H1 (cell line): ENCODE measurements at regions of chr6 and their contacts with region 1.

Region 1: GRCh38 chr6:37819177-37819823 is at the start of gene ZFAND3:
- DNase-seq: peak; percentile 79 to 98
- H3K4me3 ChIP-seq: peak within 1 kb of the TSS; percentile 74 to 93 (median 86)
- H3K27ac ChIP-seq: peak within 1 kb of the TSS; percentile 96
- H3K4me1 ChIP-seq: peaks cover 3 to 13% (median 7%) of the 10 kb centered on the region in 4 experiments; a peak in 6 of 7 replicates
- H3K27me3 ChIP-seq: no peaks in the 10 kb centered on the region; a peak in 1 of 7 replicates
- CTCF ChIP-seq: no peak
- EP300 ChIP-seq: peak in 1 of 2 experiments; percentile 95; a peak in 2 of 3 replicates
- POLR2A ChIP-seq: no peak
- RAD21 ChIP-seq: 0 out of 4 replicates have a peak, but pooled peaks of 1 of the 2 experiments have one; percentile 3
- total RNA-seq, gene ZFAND3: 44.8 and 51.3 TPM in 2 replicates

Region 2: GRCh38 chr6:37705239-37706051 is 113.9 kb before region 1 on chr6:
- CTCF ChIA-PET with region 1: no interaction called
- POLR2A ChIA-PET with region 1: interaction called, 13 read pairs
- DNase-seq: peak; percentile 67 to 85
- H3K4me3 ChIP-seq: peak overlapping the region; percentile 6 to 64 (median 38)
- H3K27ac ChIP-seq: peak overlapping the region; percentile 63; the same call in 1 of the 2 replicates
- H3K4me1 ChIP-seq: peaks cover 3 to 10% (median 8%) of the 10 kb centered on the region in 4 experiments; a peak in 6 of 7 replicates
- H3K27me3 ChIP-seq: peaks cover 11 to 23% (median 20%) of the 10 kb centered on the region in 4 experiments
- CTCF ChIP-seq: peak in 2 of 3 experiments; percentile 55 to 65; a peak in 3 of 4 replicates
- EP300 ChIP-seq: no peak
- POLR2A ChIP-seq: peak in 1 of 2 experiments; percentile 54; a peak in 2 of 3 replicates
- RAD21 ChIP-seq: peak; percentile 51

Region 3: DNA sequence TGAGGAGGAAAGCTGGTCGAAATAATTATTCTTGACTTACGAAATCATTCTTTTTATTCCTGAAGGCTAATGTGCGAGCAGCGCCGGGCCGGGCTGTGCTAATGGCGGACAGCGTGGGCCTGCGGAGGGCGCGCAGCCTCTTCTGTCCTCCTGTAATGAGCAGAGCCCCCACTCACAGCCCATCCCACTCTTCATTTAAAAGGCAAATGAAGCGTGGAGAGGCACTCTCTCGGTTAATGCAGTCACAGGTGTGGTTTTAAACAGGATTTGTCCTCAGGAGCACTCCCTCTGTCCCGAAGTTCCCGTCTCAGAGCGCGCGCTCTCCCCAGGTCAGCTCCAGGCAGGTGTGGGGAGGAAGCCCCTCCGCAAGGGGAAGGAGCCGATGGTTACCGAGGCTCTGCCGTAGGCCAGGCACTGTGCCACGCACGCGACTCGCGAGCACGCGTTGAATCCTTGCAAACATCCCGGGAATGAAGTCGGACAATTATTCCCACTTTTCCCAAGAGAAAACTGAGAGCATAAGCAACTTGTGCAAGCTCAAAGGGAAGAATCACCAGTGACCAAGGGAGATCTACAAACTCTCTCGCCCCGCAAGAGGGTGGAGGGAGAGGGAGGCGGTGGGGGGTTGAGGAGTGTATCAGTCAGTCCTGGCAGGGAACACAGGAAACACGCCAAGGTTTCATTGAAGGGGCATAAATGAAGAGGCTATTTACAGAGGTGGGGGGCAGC is 35.3 kb before region 1 on chr6:
- CTCF ChIA-PET with region 1: interaction called, 3 read pairs
- POLR2A ChIA-PET with region 1: interaction called, 26 read pairs
- DNase-seq: peak in 1 of 2 experiments; percentile 66
- H3K4me3 ChIP-seq: peak overlapping the region; percentile 44 to 73 (median 66)
- H3K27ac ChIP-seq: 0 out of 2 replicates have a peak overlapping the region, but pooled peaks have one; percentile 14
- H3K4me1 ChIP-seq: peaks cover 1 to 36% (median 20%) of the 10 kb centered on the region in 4 experiments
- H3K27me3 ChIP-seq: peaks cover 0 to 18% (median 14%) of the 10 kb centered on the region in 4 experiments; a peak in 6 of 7 replicates
- CTCF ChIP-seq: no peak
- EP300 ChIP-seq: no peak
- POLR2A ChIP-seq: peak in 1 of 2 experiments; percentile 52; a peak in 2 of 3 replicates
- RAD21 ChIP-seq: no peak

Region 4: GRCh38 chr6:37791156-37791919 is 28.0 kb before region 1 on chr6:
- CTCF ChIA-PET with region 1: interaction called, 5 read pairs
- POLR2A ChIA-PET with region 1: interaction called, 24 read pairs
- DNase-seq: peak; percentile 87 to 88
- H3K4me3 ChIP-seq: peak overlapping the region in 1 of 4 experiments; percentile 11; a peak in 2 of 8 replicates
- H3K27ac ChIP-seq: no peak overlapping the region
- H3K4me1 ChIP-seq: peaks cover 0 to 6% (median 4%) of the 10 kb centered on the region in 4 experiments; a peak in 5 of 7 replicates
- H3K27me3 ChIP-seq: no peaks in the 10 kb centered on the region
- CTCF ChIP-seq: peak; percentile 81 to 91 (median 89)
- EP300 ChIP-seq: peak in 1 of 2 experiments; percentile 55; a peak in 1 of 3 replicates
- POLR2A ChIP-seq: no peak
- RAD21 ChIP-seq: peak; percentile 85

Region 5: DNA sequence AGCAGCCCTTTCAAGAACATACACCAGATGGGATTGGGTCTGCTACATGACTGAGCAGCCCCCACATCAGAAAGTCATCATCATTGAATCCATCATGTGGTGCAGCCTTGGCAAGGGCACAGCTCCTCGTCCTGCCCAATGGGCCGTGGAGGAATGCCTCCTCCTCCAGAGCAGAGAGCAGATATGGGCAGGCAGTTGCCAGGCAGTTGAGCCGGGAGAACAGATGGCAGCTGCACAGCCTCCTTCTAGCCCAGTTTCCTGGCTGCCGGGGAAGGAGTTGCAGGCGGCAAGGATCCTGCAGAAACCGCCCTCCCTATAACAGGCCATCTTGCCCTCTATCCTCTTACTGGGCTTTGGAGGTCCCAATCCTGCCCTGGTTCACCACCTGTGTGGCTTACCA is 11.6 kb before region 1 on chr6:
- CTCF ChIA-PET with region 1: interaction called, 5 read pairs
- POLR2A ChIA-PET with region 1: interaction called, 20 read pairs
- DNase-seq: no peak
- H3K4me3 ChIP-seq: no peak overlapping the region
- H3K27ac ChIP-seq: no peak overlapping the region
- H3K4me1 ChIP-seq: peaks cover 0 to 6% (median 0%) of the 10 kb centered on the region in 4 experiments; a peak in 2 of 7 replicates
- H3K27me3 ChIP-seq: no peaks in the 10 kb centered on the region
- CTCF ChIP-seq: peak in 2 of 3 experiments; percentile 17 to 18; a peak in 2 of 4 replicates
- EP300 ChIP-seq: no peak
- POLR2A ChIP-seq: no peak
- RAD21 ChIP-seq: no peak

Region 6: GRCh38 chr6:37831457-37831856 is 12.2 kb after region 1 on chr6:
- CTCF ChIA-PET with region 1: interaction called, 5 read pairs
- POLR2A ChIA-PET with region 1: interaction called, 22 read pairs
- DNase-seq: no peak
- H3K4me3 ChIP-seq: no peak overlapping the region
- H3K27ac ChIP-seq: no peak overlapping the region
- H3K4me1 ChIP-seq: no peaks in the 10 kb centered on the region
- H3K27me3 ChIP-seq: no peaks in the 10 kb centered on the region
- CTCF ChIP-seq: no peak
- EP300 ChIP-seq: no peak
- POLR2A ChIP-seq: no peak
- RAD21 ChIP-seq: no peak

Region 7: GRCh38 chr6:38068854-38069590 is 249.7 kb after region 1 on chr6:
- CTCF ChIA-PET with region 1: no interaction called
- POLR2A ChIA-PET with region 1: no interaction called
- DNase-seq: no peak
- H3K4me3 ChIP-seq: no peak overlapping the region
- H3K27ac ChIP-seq: no peak overlapping the region
- H3K4me1 ChIP-seq: 0 out of 7 replicates have a peak, but pooled peaks cover 0 to 2% (median 0%) of the 10 kb centered on the region in 4 experiments
- H3K27me3 ChIP-seq: no peaks in the 10 kb centered on the region
- CTCF ChIP-seq: no peak
- EP300 ChIP-seq: no peak
- POLR2A ChIP-seq: no peak
- RAD21 ChIP-seq: no peak